H1 (cell line): ENCODE measurements at regions of chr17 and their contacts with region 1.

Region 1: DNA sequence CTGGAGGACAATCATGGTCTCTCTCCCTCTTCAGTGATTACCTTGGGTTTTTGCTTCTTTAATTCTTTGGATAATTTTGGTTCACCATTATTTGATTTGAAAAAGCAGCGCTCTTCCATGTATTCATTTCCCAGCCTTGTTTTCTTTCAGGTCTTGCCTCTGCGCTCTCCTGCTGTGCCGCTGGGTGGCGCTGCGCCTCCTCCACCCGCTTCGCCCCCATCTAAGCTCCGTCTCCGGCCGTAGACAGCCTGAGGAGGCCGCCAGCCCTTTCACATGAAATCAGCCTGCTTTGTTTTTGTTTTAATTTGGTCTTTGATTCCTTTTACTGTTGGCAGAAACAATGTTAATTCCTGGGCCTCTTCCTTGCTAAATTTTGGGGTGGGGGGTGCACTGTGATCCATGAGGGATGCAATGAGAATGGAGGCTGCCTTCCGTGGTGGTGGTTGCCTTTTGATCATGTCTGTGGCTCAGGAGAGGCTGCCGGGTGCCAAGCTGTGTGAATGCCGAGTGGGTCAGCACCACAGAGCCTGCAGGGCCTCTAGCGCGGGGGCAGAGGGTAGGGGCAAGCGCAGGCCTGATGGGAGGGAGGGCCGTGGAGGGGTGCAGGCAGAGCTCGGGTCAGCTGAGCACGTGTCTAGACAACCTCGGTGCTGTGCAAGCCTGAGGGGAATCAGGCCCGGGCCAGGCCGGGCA is 64.1 kb downstream of the PLD6 start:
- DNase-seq: peak in 1 of 2 experiments; percentile 83
- H3K4me3 ChIP-seq: no peak overlapping the region
- H3K27ac ChIP-seq: no peak overlapping the region
- H3K4me1 ChIP-seq: peaks cover 0 to 17% (median 3%) of the 10 kb centered on the region in 4 experiments; a peak in 5 of 7 replicates
- H3K27me3 ChIP-seq: no peaks in the 10 kb centered on the region
- CTCF ChIP-seq: peak; percentile 80 to 97 (median 95)
- EP300 ChIP-seq: no peak
- POLR2A ChIP-seq: no peak
- RAD21 ChIP-seq: peak; percentile 75 to 80

Region 2: GRCh38 chr17:17041571-17042380 is 100.2 kb before region 1 on chr17:
- CTCF ChIA-PET with region 1: interaction called, 10 read pairs
- POLR2A ChIA-PET with region 1: no interaction called
- DNase-seq: peak; percentile 84 to 97
- H3K4me3 ChIP-seq: peak overlapping the region; percentile 56 to 74 (median 60)
- H3K27ac ChIP-seq: no peak overlapping the region
- H3K4me1 ChIP-seq: peaks cover 3 to 12% (median 8%) of the 10 kb centered on the region in 4 experiments; a peak in 5 of 7 replicates
- H3K27me3 ChIP-seq: peaks cover 0 to 5% (median 3%) of the 10 kb centered on the region in 4 experiments; a peak in 2 of 7 replicates
- CTCF ChIP-seq: no peak
- EP300 ChIP-seq: no peak
- POLR2A ChIP-seq: no peak
- RAD21 ChIP-seq: no peak

Region 3: DNA sequence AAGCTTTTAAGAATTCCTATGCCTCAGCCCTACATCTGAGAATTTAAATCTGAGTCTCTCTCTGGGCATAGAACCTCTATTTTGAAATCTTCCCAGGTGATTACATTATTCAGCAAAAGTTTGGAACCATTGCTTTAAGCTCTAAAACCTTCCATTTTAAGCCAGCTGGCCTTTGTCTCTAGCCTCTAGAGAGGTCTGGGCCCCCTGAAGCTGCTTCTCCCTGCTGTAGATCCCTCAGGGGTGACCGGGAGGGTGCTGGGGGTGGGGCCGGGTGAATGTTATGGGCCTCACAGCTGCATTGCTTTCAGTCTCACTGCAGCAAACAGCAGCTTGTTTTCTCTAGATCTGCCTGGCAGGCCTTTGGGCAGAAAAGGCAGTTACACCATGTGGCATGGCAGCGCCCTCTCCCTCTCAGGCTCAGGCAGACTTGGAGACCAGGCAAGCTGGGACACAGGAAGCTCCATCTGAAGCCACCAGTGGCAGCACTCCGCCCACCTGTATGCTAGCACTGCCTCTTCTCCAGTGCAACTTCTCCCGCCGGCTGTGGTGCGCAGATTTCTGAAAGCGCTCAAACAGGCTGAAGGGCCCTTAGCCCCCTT is 33.5 kb before region 1 on chr17:
- CTCF ChIA-PET with region 1: interaction called, 18 read pairs
- POLR2A ChIA-PET with region 1: interaction called, 3 read pairs
- DNase-seq: no peak
- H3K4me3 ChIP-seq: no peak overlapping the region
- H3K27ac ChIP-seq: no peak overlapping the region
- H3K4me1 ChIP-seq: peaks cover 0 to 8% (median 4%) of the 10 kb centered on the region in 4 experiments; a peak in 4 of 7 replicates
- H3K27me3 ChIP-seq: no peaks in the 10 kb centered on the region
- CTCF ChIP-seq: peak in 1 of 3 experiments; percentile 27; a peak in 2 of 4 replicates
- EP300 ChIP-seq: no peak
- POLR2A ChIP-seq: no peak
- RAD21 ChIP-seq: peak; percentile 21; a peak in 3 of 4 replicates

Region 4: DNA sequence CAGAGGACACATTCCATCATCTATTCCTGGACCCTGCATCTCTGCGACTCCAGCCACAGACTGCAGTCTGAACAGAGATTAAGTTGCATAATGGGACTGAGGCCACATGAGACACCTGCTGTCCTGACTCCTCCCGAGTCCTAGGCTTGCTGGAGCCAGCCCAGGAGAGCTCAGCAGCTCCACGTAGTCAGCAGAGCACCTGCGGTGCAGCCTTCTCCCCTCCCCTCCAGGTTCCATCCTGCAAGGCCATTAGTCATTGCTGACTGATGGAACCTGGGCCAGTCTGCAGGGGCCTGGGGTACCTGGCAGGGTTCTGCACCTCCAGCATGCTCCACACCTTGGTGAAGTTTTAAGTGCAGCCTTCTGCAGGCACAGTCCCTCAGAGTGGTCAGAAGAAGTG is 12.5 kb before region 1 on chr17:
- CTCF ChIA-PET with region 1: interaction called, 117 read pairs
- POLR2A ChIA-PET with region 1: no interaction called
- DNase-seq: no peak
- H3K4me3 ChIP-seq: no peak overlapping the region
- H3K27ac ChIP-seq: no peak overlapping the region
- H3K4me1 ChIP-seq: peaks cover 0 to 6% (median 2%) of the 10 kb centered on the region in 4 experiments; a peak in 3 of 7 replicates
- H3K27me3 ChIP-seq: no peaks in the 10 kb centered on the region
- CTCF ChIP-seq: no peak
- EP300 ChIP-seq: no peak
- POLR2A ChIP-seq: no peak
- RAD21 ChIP-seq: no peak

Region 5: DNA sequence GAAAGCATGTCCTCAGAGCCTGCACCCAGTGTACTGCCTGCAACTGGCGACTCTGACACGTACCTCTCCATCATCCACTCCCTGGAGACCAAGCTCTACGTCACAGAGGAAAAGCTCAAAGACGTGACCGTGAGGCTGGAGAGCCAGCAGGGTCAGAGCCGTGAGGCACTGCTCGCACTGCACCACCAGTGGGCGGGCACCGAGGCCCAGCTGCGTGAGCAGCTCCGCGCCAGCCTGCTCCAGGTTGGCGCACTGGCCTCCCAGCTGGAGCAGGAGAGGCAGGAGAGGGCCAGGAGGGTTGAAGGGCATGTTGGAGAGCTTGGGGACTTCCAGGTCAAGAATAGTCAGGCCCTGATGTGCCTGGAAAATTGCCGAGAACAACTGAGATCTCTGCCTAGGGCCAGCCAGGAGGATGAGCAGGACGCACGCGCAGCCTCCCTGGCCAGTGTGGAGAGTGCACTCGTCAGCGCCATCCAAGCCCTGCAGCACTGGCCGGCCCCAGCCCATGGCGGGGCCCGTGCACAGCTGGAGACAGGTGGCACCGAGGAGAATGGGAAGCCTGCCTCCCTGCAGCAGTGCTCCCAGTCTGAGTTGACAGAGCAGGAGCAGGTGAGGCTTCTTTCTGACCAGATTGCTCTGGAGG is 23.8 kb after region 1 on chr17:
- CTCF ChIA-PET with region 1: interaction called, 44 read pairs
- POLR2A ChIA-PET with region 1: no interaction called
- DNase-seq: no peak
- H3K4me3 ChIP-seq: no peak overlapping the region
- H3K27ac ChIP-seq: no peak overlapping the region
- H3K4me1 ChIP-seq: no peaks in the 10 kb centered on the region
- H3K27me3 ChIP-seq: no peaks in the 10 kb centered on the region; a peak in 1 of 7 replicates
- CTCF ChIP-seq: no peak
- EP300 ChIP-seq: no peak
- POLR2A ChIP-seq: no peak
- RAD21 ChIP-seq: no peak

Region 6: DNA sequence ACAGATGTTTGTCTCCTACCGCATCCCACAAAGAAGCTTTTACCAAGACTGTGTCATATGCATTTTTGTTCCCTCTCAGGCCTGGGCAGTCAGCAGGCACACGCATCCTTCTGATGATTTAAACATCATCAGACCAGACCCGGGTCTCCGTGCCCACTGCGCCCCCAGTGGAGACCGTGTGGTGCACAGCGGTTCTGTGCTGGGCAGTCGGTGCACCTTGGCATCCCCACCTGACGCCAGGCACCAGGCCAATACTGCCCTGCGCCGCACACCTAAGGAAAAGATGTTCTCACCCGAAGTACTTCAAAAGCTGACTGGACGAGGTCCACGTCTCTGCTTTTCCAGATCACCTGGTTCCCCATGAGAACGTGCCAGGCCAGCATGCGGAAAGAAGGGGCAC is 74.8 kb after region 1 on chr17:
- CTCF ChIA-PET with region 1: interaction called, 11 read pairs
- POLR2A ChIA-PET with region 1: no interaction called
- DNase-seq: no peak
- H3K4me3 ChIP-seq: no peak overlapping the region
- H3K27ac ChIP-seq: no peak overlapping the region
- H3K4me1 ChIP-seq: no peaks in the 10 kb centered on the region; a peak in 1 of 7 replicates
- H3K27me3 ChIP-seq: no peaks in the 10 kb centered on the region
- CTCF ChIP-seq: peak in 2 of 3 experiments; percentile 42 to 50; a peak in 2 of 4 replicates
- EP300 ChIP-seq: no peak
- POLR2A ChIP-seq: no peak
- RAD21 ChIP-seq: no peak; a peak in 1 of 4 replicates